ENCODE measurements at regions of chr5 and their contacts with region 1.

Region 1: GRCh38 chr5:156188016-156188415 is 138.9 kb upstream of the SGCD start:
- DNase-seq: no peak
- ATAC-seq: no peak
- H3K4me3 ChIP-seq: no peak overlapping the region
- H3K27ac ChIP-seq: no peak overlapping the region
- H3K4me1 ChIP-seq: peaks cover 3 to 12% of the 10 kb centered on the region in 2 donors
- H3K27me3 ChIP-seq: no peaks in the 10 kb centered on the region

Region 2: DNA sequence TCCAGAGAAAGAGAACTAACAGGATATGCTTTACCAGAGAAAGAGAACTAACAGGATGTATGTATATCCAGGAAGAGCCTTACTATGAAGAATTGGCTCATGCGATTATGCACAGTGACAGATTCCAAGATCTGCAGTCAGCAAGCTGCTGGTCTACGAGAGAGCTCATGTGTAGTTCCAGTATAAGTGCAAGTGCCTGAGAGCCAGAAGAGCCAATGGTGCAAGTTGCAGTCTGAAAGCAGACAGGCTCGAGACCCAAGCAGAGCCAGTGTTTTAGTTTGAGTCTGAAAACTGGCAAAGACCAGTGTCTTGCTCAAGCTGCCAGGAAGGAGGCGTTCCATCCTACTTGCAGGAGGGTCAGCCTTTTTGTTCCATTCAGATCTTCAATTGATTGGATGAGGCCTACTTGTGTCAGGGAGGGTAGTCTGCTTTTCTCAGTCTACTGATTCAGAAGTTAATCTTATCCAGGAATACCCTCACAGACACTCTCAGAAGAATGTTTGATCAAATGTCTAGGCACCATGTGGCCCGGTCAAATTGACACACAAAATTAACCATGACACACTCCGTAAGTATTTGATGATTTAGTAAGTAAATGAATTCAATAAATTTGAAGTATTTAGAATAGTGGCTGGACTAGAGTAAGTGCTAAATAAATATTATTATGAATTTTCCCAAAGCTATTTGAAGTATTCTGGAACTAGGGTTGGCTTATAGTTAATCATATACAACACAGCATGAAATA is 233.1 kb before region 1 on chr5:
- intact Hi-C with region 1: loop called in 1 of 2 experiments (anchors 10 kb)
- DNase-seq: no peak
- ATAC-seq: no peak
- H3K4me3 ChIP-seq: no peak overlapping the region
- H3K27ac ChIP-seq: peak overlapping the region in 1 of 2 donors; percentile 78
- H3K4me1 ChIP-seq: peaks cover 0 to 2% of the 10 kb centered on the region in 2 donors
- H3K27me3 ChIP-seq: no peaks in the 10 kb centered on the region

Region 3: DNA sequence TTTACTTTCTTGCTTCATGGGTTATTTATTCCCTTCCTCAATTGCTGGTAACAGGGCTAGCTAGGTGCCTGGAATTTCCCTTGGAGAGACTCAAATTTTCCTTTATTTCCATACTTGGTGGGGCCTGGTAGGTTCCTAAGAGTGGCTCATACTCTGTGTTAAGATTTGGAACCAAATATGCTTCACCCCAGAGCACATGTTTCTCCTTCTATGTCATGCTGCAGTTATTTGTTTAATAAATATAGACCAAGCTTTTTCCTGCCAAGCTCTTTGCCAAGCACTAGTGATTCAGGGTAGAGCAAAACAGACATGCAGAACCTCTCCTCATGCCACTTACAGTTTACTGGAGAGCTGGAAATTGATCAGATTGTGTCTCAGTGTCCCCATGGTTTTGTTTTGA is 151.4 kb before region 1 on chr5:
- intact Hi-C with region 1: loop called in 1 of 2 experiments (anchors 10 kb)
- DNase-seq: no peak
- ATAC-seq: peak; percentile 84
- H3K4me3 ChIP-seq: no peak overlapping the region
- H3K27ac ChIP-seq: peak overlapping the region in 1 of 2 donors; percentile 96
- H3K4me1 ChIP-seq: peaks cover 0 to 5% of the 10 kb centered on the region in 2 donors
- H3K27me3 ChIP-seq: no peaks in the 10 kb centered on the region

Region 4: DNA sequence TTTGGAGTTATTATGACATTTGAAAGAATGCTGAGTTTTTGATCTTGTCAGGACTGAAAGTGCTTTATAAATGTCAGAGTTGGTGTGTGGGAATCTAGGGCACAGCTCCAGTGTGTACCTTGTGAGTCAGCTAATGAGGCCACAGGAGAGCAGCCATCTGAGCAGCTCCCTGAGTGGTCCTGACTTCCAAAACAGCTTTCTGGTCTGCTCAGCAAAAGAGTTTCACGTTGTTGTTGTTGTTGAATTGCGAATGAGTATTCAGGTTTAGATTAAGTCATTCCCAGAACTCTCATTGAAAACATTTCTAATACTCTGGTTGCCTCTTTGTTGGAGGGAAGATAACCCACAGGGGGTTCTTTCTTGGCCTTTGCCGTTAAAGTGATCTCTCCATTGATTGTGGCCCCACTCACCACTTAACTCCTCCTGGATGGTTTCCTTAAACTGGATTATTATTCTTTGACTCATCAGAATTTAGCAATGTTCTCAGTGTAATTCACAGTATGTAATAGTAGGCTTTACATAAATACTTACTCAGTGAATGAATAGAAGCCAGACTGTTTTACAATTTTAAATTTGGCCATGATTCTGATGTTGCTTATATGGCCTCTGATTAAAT is 13.9 kb after region 1 on chr5:
- intact Hi-C with region 1: loop called in 1 of 2 experiments (anchors 2 kb)
- DNase-seq: peak in 1 of 2 donors; percentile 48
- ATAC-seq: no peak
- H3K4me3 ChIP-seq: no peak overlapping the region
- H3K27ac ChIP-seq: no peak overlapping the region
- H3K4me1 ChIP-seq: no peaks in the 10 kb centered on the region
- H3K27me3 ChIP-seq: no peaks in the 10 kb centered on the region

Region 5: GRCh38 chr5:156259618-156260017 is 71.6 kb after region 1 on chr5:
- intact Hi-C with region 1: no loop called
- DNase-seq: no peak
- ATAC-seq: no peak
- H3K4me3 ChIP-seq: no peak overlapping the region
- H3K27ac ChIP-seq: no peak overlapping the region
- H3K4me1 ChIP-seq: no peaks in the 10 kb centered on the region
- H3K27me3 ChIP-seq: no peaks in the 10 kb centered on the region

Region 6: DNA sequence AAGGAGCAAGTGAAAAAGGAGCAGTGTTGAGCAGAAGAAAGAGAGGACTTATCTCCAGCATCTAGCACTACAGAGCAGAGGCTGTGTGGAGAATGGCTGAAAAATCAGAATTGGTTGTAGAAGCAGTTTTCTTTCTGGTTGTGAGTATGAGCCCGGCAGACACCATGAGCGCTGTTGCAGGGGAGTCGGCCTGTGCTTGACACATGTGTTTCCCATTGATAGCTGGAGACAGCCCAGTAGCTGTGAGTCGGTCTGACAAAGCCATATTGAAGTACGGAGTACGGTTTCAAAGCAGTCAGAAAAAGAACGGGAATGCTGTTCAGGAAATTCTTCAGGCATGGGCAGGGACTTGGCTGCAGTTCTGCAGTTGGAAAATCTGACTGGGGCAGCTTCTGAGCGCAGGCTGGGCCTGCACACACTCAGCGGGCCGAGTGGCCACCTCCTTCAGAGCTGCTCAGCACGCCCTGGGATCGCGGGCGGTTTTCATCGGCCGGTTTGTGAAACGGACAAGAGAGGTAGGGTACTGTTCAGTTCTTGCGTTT is 138.8 kb after region 1 on chr5 and contains the start of gene SGCD:
- intact Hi-C with region 1: loop called in 1 of 2 experiments (anchors 5 kb)
- DNase-seq: peak; percentile 84 to 94
- ATAC-seq: peak; percentile 92
- H3K4me3 ChIP-seq: peak within 1 kb of the TSS; percentile 92 to 98
- H3K27ac ChIP-seq: peak within 1 kb of the TSS; percentile 84 to 94
- H3K4me1 ChIP-seq: peaks cover 2 to 14% of the 10 kb centered on the region in 2 donors
- H3K27me3 ChIP-seq: no peaks in the 10 kb centered on the region
- total RNA-seq, gene SGCD: 31.2 to 129 TPM

Region 7: DNA sequence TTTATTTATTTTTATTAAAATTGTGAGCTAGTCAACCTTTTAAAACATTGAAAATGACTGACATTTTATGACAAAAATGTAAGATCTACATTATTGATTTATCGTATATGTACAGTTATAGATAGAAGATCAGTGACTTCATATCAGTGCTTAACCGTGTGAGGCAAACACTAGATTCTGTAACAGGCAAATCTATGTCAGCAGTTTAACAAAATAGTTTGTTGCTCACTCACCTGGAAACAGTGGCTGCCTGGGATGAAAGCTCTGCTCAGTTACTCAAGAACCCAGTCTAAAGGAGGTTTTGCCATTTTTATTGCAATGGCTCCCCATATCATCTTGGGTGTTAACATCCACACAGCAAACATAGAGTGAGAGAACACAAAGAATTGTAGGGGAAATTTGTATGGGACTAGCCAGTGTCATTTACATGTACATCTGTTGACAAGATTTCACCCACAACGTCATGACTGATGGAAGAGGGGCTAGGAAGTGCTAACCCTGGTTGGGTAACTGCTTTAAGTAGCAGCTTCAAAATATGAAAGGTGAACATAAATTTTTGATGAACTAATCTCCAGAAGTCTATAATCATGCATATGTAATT is 188.0 kb after region 1 on chr5:
- intact Hi-C with region 1: no loop called
- DNase-seq: no peak
- ATAC-seq: no peak
- H3K4me3 ChIP-seq: no peak overlapping the region
- H3K27ac ChIP-seq: no peak overlapping the region
- H3K4me1 ChIP-seq: peaks cover 1 to 5% of the 10 kb centered on the region in 2 donors
- H3K27me3 ChIP-seq: no peaks in the 10 kb centered on the region

Measured in aorta (tissue), 5 donors.